Gastrocnemius medialis (tissue), 4 donors: ENCODE measurements at regions of chr9 and their contacts with region 1.

Region 1: GRCh38 chr9:72577212-72577753 is 55.9 kb downstream of the TMC1 start:
- DNase-seq: peak in 1 of 2 donors; percentile 36
- ATAC-seq: peak; percentile 70
- H3K4me3 ChIP-seq: peak overlapping the region in 3 of 4 donors; percentile 34 to 46 (median 39)
- H3K27ac ChIP-seq: peak overlapping the region; percentile 78 to 90 (median 88)
- H3K4me1 ChIP-seq: peaks cover 44 to 54% of the 10 kb centered on the region in 2 donors
- H3K27me3 ChIP-seq: no peaks in the 10 kb centered on the region
- CTCF ChIP-seq: no peak
- POLR2A ChIP-seq: peak; percentile 8 to 11

Region 2: GRCh38 chr9:72305102-72305546 is 272.2 kb before region 1 on chr9:
- in situ Hi-C with region 1: loop called in 1 of 4 experiments (anchors 10 kb)
- intact Hi-C with region 1: no loop called
- DNase-seq: peak; percentile 57 to 67
- ATAC-seq: peak; percentile 57 to 87
- H3K4me3 ChIP-seq: peak overlapping the region in 3 of 4 donors; percentile 14 to 49 (median 22)
- H3K27ac ChIP-seq: peak overlapping the region; percentile 23 to 86 (median 76)
- H3K4me1 ChIP-seq: peaks cover 0 to 14% of the 10 kb centered on the region in 2 donors
- H3K27me3 ChIP-seq: no peaks in the 10 kb centered on the region
- CTCF ChIP-seq: no peak
- POLR2A ChIP-seq: peak; percentile 42 to 83

Region 3: DNA sequence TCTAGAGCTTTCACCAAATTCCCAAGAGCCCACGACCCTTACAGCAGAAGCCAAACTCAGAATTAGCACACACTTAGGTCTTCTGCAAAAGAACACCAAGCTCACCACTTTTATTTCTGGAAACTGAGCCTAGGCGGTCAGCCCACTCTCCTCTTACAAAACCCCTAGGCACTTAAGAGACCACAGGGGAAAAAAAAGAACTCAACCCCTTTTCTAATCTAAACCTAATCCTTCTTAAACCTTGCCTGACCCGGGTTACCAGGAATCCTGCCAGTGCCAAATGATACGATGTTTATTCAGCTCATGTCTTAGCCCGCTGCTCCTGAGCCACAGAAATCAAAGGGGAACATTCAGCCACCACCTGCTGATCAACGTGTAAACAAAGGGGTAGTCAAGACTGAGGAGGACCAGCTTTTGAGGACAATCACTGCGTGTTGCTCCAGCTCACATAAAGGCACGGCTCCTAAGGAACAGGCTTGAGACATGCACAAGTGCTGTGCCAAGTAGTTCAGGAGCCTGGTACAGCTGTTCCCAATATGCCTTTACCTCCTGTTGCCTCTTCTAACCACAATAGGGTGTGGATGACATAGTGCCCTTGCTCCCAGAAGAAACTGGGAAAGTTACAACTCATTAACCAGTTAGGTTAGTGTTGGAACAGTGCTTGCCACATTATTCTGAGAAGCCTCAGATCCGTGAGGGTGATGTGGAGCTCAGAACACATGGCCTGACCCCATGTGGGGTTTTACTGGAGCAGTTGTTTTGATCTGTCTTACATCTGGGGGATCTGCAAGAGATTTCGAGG is 261.6 kb before region 1 on chr9:
- in situ Hi-C with region 1: no loop called
- intact Hi-C with region 1: loop called (anchors 2 kb)
- DNase-seq: peak; percentile 88 to 90
- ATAC-seq: peak; percentile 84 to 92
- H3K4me3 ChIP-seq: peak overlapping the region; percentile 24 to 55 (median 31)
- H3K27ac ChIP-seq: peak overlapping the region; percentile 88 to 89 (median 88)
- H3K4me1 ChIP-seq: peaks cover 25 to 35% of the 10 kb centered on the region in 2 donors
- H3K27me3 ChIP-seq: no peaks in the 10 kb centered on the region
- CTCF ChIP-seq: no peak
- POLR2A ChIP-seq: peak in 1 of 2 donors; percentile 34

Region 4: GRCh38 chr9:72396247-72397091 is 180.8 kb before region 1 on chr9:
- in situ Hi-C with region 1: loop called in 1 of 4 experiments (anchors 25 kb)
- intact Hi-C with region 1: loop called (anchors 2 kb)
- DNase-seq: peak in 1 of 2 donors; percentile 19
- ATAC-seq: peak; percentile 95 to 100
- H3K4me3 ChIP-seq: peak overlapping the region in 2 of 4 donors; percentile 3 to 24
- H3K27ac ChIP-seq: peak overlapping the region; percentile 72 to 83 (median 82)
- H3K4me1 ChIP-seq: peaks cover 5 to 17% of the 10 kb centered on the region in 2 donors
- H3K27me3 ChIP-seq: no peaks in the 10 kb centered on the region
- CTCF ChIP-seq: peak in 1 of 5 experiments; percentile 10
- POLR2A ChIP-seq: peak in 1 of 2 donors; percentile 25

Region 5: GRCh38 chr9:72473474-72474261 is 103.6 kb before region 1 on chr9:
- in situ Hi-C with region 1: no loop called
- intact Hi-C with region 1: loop called (anchors 5 kb)
- DNase-seq: no peak
- ATAC-seq: no peak
- H3K4me3 ChIP-seq: no peak overlapping the region
- H3K27ac ChIP-seq: no peak overlapping the region
- H3K4me1 ChIP-seq: peaks cover 6 to 18% of the 10 kb centered on the region in 2 donors
- H3K27me3 ChIP-seq: no peaks in the 10 kb centered on the region
- CTCF ChIP-seq: no peak
- POLR2A ChIP-seq: no peak

Region 6: DNA sequence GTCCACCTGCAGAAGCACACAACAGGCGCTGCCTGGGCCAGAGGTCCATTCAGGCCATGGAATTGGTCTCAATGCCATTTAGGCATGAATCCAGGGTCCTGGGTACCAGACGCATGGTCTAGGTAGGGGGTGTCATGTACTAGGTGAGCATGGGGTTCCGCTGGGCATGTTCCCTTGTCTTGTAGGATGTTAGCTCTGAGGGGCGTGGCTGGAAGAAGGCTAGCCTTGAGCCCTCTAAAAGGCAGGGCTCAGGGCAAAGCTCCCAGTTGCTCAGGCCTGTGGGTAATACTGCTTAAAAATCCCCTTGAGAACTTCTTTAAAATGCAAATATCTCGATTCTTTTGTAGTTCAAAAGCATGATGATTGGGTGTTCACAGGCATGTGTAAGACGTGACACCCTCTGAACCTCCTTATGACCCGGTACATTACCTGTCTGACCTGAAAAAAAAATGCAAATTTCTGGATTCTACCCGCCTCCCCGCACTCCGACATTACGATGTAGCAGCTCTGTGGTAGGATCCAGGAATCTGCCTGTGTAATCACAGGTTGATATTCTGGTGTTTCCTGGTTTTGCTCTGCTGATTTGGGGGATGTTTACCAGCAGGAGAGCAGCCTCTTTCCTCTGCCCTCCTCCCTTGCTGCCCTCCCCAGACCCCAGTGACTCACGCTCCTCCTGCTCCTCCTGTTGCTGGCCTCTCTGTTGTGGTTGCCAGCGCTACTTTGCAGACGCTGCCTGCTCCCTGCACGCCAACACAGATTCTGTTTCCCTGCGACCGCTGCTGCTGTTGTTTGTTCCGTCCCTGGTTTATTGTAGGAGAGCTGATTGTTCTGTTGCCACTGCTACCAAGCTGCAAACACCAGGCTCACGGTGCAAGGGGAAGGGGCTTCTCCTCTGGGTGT is 50.1 kb before region 1 on chr9:
- in situ Hi-C with region 1: no loop called
- intact Hi-C with region 1: loop called (anchors 2 kb)
- DNase-seq: peak; percentile 80 to 82
- ATAC-seq: peak; percentile 95
- H3K4me3 ChIP-seq: peak overlapping the region; percentile 13 to 48 (median 34)
- H3K27ac ChIP-seq: peak overlapping the region; percentile 63 to 80 (median 74)
- H3K4me1 ChIP-seq: peaks cover 16 to 21% of the 10 kb centered on the region in 2 donors
- H3K27me3 ChIP-seq: no peaks in the 10 kb centered on the region
- CTCF ChIP-seq: no peak
- POLR2A ChIP-seq: peak; percentile 21 to 73

Region 7: GRCh38 chr9:72960446-72960845 is 383.2 kb after region 1 on chr9:
- in situ Hi-C with region 1: no loop called
- intact Hi-C with region 1: no loop called
- DNase-seq: no peak
- ATAC-seq: no peak
- H3K4me3 ChIP-seq: no peak overlapping the region
- H3K27ac ChIP-seq: no peak overlapping the region
- H3K4me1 ChIP-seq: no peaks in the 10 kb centered on the region
- H3K27me3 ChIP-seq: no peaks in the 10 kb centered on the region
- CTCF ChIP-seq: no peak
- POLR2A ChIP-seq: no peak